CD4-positive, alpha-beta memory T cell (primary cell): ENCODE measurements at regions of chr1 and their contacts with region 1.

Region 1: GRCh38 chr1:193406901-193407300 is 220.5 kb upstream of the B3GALT2 start:
- DNase-seq: peak in 4 of 5 donors; percentile 48 to 63 (median 56)
- H3K4me3 ChIP-seq: no peak overlapping the region
- H3K4me3 Mint-ChIP-seq: peak overlapping the region in 6 of 8 donors; percentile 0 to 29 (median 8)
- H3K27ac ChIP-seq: no peak overlapping the region
- H3K27ac Mint-ChIP-seq: peak overlapping the region in 4 of 7 donors; percentile 15 to 81 (median 52)
- H3K4me1 ChIP-seq: peaks cover 26% of the 10 kb centered on the region
- H3K4me1 Mint-ChIP-seq: peaks cover 21 to 40% (median 29%) of the 10 kb centered on the region in 4 donors
- H3K27me3 ChIP-seq: no peaks in the 10 kb centered on the region
- H3K27me3 Mint-ChIP-seq: no peaks in the 10 kb centered on the region

Region 2: DNA sequence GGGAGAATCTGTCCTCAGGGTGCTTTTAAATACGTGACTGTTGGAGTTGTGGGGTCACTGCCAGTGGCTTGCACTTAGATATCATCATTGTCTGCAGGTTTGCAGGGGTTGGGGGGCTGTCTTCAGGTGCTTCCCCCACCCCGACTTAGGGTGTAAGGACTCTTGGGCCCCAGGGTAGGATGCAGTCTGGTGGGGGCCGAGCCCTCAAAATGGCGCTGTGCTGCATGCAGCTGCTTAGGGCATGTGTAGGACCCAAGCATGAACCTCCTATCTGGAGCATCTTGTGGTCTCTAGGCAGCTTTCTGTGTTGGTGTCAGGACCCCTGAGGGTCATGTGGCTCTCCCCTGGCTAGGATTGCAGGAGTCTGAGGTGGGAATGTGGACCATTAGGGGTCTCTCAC is 164.9 kb before region 1 on chr1:
- CTCF ChIA-PET with region 1: no interaction called
- POLR2A ChIA-PET with region 1: no interaction called
- intact Hi-C with region 1: no loop called
- DNase-seq: no peak
- H3K4me3 ChIP-seq: no peak overlapping the region
- H3K4me3 Mint-ChIP-seq: peak overlapping the region in 1 of 8 donors; percentile 6
- H3K27ac ChIP-seq: no peak overlapping the region
- H3K27ac Mint-ChIP-seq: peak overlapping the region in 5 of 7 donors; percentile 20 to 64 (median 51)
- H3K4me1 ChIP-seq: peaks cover 30% of the 10 kb centered on the region
- H3K4me1 Mint-ChIP-seq: peaks cover 33 to 49% (median 39%) of the 10 kb centered on the region in 4 donors
- H3K27me3 ChIP-seq: no peaks in the 10 kb centered on the region
- H3K27me3 Mint-ChIP-seq: no peaks in the 10 kb centered on the region

Region 3: GRCh38 chr1:193417945-193418744 is 11.2 kb after region 1 on chr1:
- CTCF ChIA-PET with region 1: no interaction called
- POLR2A ChIA-PET with region 1: interaction called, 3 read pairs
- intact Hi-C with region 1: loop called (anchors 2 kb)
- DNase-seq: peak in 4 of 5 donors; percentile 53 to 62 (median 56)
- H3K4me3 ChIP-seq: peak overlapping the region; percentile 24 to 50
- H3K4me3 Mint-ChIP-seq: peak overlapping the region; percentile 79 to 89 (median 84)
- H3K27ac ChIP-seq: peak overlapping the region; percentile 58
- H3K27ac Mint-ChIP-seq: peak overlapping the region; percentile 76 to 97 (median 92)
- H3K4me1 ChIP-seq: peaks cover 34% of the 10 kb centered on the region
- H3K4me1 Mint-ChIP-seq: peaks cover 32 to 54% (median 36%) of the 10 kb centered on the region in 4 donors
- H3K27me3 ChIP-seq: no peaks in the 10 kb centered on the region
- H3K27me3 Mint-ChIP-seq: no peaks in the 10 kb centered on the region

Region 4: GRCh38 chr1:193754732-193755427 is 348.0 kb after region 1 on chr1:
- CTCF ChIA-PET with region 1: no interaction called
- POLR2A ChIA-PET with region 1: no interaction called
- intact Hi-C with region 1: loop called (anchors 1 kb)
- DNase-seq: no peak
- H3K4me3 ChIP-seq: no peak overlapping the region
- H3K4me3 Mint-ChIP-seq: no peak overlapping the region
- H3K27ac ChIP-seq: no peak overlapping the region
- H3K27ac Mint-ChIP-seq: peak overlapping the region in 1 of 7 donors; percentile 10
- H3K4me1 ChIP-seq: peaks cover 5% of the 10 kb centered on the region
- H3K4me1 Mint-ChIP-seq: peaks cover 2 to 13% (median 3%) of the 10 kb centered on the region in 4 donors
- H3K27me3 ChIP-seq: no peaks in the 10 kb centered on the region
- H3K27me3 Mint-ChIP-seq: no peaks in the 10 kb centered on the region